Heart left ventricle (tissue), 16 donors: ENCODE measurements at regions of chr15 and their contacts with region 1.

Region 1: GRCh38 chr15:75639709-75640482 is at the start of gene IMP3:
- DNase-seq: peak; percentile 95 to 97 (median 95)
- ATAC-seq: peak; percentile 98 to 99 (median 98)
- H3K4me3 ChIP-seq: peak within 1 kb of the TSS; percentile 71 to 99 (median 86)
- H3K27ac ChIP-seq: peak within 1 kb of the TSS; percentile 86 to 99 (median 94)
- H3K4me1 ChIP-seq: peaks cover 9 to 44% (median 30%) of the 10 kb centered on the region in 12 donors
- H3K27me3 ChIP-seq: no peaks in the 10 kb centered on the region
- CTCF ChIP-seq: peak in 1 of 12 donors; percentile 23
- POLR2A ChIP-seq: peak; percentile 82 to 97
- total RNA-seq, gene IMP3: 37.1 to 151 (median 44.5) TPM

Region 2: DNA sequence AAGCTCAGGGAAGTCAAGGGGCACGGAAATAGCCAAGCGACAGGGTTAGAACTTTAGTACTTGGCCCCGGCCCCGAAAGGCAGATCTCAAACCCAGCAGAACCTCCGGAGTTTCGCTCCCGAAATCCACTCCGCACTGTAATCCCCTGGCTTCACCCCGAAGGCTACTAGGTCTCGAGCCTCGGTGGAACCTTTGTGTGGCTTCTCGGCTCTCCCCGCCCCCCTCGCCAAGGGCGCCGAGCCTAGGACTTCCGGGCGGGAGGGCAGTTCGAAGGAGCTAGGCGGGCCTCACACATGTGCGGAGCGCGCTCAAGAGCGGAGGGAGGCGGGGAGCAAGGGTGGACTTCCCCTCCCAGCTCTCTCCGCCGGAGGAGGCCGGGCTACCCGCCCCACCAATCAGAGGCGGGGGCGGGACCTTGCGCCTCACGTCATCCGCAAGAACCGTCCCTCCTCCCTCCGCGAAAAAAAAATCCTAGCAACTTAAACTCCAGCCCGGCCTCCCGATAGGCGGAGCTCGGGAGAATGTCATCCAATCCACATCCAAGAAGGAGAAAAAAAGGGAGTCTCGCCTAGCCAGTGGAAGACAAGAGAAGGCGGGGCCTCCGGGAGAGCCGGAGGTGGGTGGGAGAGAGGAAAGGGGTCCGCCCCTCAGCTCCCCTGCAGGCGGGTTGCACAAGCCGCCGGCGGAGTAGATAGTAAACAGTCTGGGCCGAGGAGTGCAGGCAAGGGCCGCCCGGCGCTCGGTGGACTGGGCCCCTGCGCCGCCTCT is 186.0 kb before region 1 on chr15:
- intact Hi-C with region 1: loop called in 3 of 10 experiments (anchors 5 to 10 kb)
- DNase-seq: peak; percentile 98 to 99 (median 98)
- ATAC-seq: peak; percentile 65 to 76 (median 70)
- H3K4me3 ChIP-seq: peak overlapping the region; percentile 84 to 98 (median 95)
- H3K27ac ChIP-seq: peak overlapping the region; percentile 94 to 100 (median 98)
- H3K4me1 ChIP-seq: peaks cover 4 to 37% (median 26%) of the 10 kb centered on the region in 12 donors
- H3K27me3 ChIP-seq: no peaks in the 10 kb centered on the region
- CTCF ChIP-seq: peak in 4 of 12 donors; percentile 10 to 39 (median 20)
- POLR2A ChIP-seq: peak in 1 of 2 donors; percentile 52